ENCODE measurements at regions of chr19 and their contacts with region 1.

Region 1: GRCh38 chr19:36214386-36215275 is at the starts of genes ZNF146 and ZNF565:
- DNase-seq: peak; percentile 95
- H3K4me3 Mint-ChIP-seq: no peak within 1 kb of the TSS
- H3K27ac Mint-ChIP-seq: no peak within 1 kb of the TSS
- H3K4me1 Mint-ChIP-seq: peaks cover 3% of the 10 kb centered on the region
- H3K27me3 Mint-ChIP-seq: no peaks in the 10 kb centered on the region
- total RNA-seq, gene ZNF146: 82.3 and 86.4 TPM in 2 replicates
- total RNA-seq, gene ZNF565: 1.5 and 2.4 TPM in 2 replicates

Region 2: GRCh38 chr19:35740423-35741202 is 474.0 kb before region 1 on chr19:
- intact Hi-C with region 1: loop called (anchors 10 kb)
- DNase-seq: peak; percentile 95
- H3K4me3 Mint-ChIP-seq: peak overlapping the region; percentile 94
- H3K27ac Mint-ChIP-seq: peak overlapping the region; percentile 94
- H3K4me1 Mint-ChIP-seq: peaks cover 25% of the 10 kb centered on the region
- H3K27me3 Mint-ChIP-seq: no peaks in the 10 kb centered on the region

Region 3: GRCh38 chr19:36132489-36132891 is 82.1 kb before region 1 on chr19:
- intact Hi-C with region 1: loop called (anchors 2 kb)
- DNase-seq: no peak
- H3K4me3 Mint-ChIP-seq: peak overlapping the region; percentile 2
- H3K27ac Mint-ChIP-seq: peak overlapping the region; percentile 30
- H3K4me1 Mint-ChIP-seq: peaks cover 26% of the 10 kb centered on the region
- H3K27me3 Mint-ChIP-seq: no peaks in the 10 kb centered on the region

Region 4: DNA sequence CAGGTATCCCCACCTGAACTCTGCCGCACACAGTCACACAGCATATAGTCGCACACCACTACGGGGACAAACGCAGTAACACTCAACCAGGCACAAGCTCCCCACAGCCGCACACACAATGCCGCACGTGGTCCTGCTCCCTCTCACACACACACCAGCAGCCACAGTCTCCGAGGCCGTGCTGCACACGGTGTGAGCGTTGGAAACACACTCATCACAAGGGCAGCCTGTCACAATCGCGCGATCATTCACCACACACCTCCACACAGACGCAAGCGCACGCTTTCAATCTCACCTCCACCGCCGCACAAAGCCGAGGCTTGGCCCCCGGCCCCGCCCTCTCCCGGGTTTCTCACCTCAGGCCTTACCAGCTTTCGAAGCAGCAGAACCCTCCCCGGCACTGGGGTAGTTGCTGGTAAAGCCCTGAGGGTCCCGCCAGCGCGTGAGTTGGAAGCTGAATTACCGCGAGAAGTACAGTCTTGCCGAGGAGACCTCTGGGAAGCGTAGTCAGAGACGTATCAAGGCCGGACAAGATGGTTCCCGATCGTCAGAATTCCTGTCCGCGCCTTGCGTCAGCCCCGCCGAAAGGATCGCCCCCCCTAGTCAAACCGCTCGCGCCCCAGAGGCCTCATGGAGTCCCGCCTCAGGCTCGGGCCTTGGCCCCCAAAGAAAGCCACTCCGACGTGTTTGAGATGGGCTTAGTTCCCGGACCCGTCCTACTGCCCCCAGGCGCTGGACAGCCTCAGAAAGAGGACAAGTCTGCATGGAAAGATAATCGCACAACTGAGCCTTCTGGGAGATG is 274.7 kb after region 1 on chr19 and contains the start of gene ZNF566:
- intact Hi-C with region 1: loop called (anchors 1 kb)
- DNase-seq: peak; percentile 92
- H3K4me3 Mint-ChIP-seq: peak within 1 kb of the TSS; percentile 93
- H3K27ac Mint-ChIP-seq: peak within 1 kb of the TSS; percentile 97
- H3K4me1 Mint-ChIP-seq: peaks cover 19% of the 10 kb centered on the region
- H3K27me3 Mint-ChIP-seq: no peaks in the 10 kb centered on the region
- total RNA-seq, gene ZNF566: 7.3 and 7.7 TPM in 2 replicates

Region 5: DNA sequence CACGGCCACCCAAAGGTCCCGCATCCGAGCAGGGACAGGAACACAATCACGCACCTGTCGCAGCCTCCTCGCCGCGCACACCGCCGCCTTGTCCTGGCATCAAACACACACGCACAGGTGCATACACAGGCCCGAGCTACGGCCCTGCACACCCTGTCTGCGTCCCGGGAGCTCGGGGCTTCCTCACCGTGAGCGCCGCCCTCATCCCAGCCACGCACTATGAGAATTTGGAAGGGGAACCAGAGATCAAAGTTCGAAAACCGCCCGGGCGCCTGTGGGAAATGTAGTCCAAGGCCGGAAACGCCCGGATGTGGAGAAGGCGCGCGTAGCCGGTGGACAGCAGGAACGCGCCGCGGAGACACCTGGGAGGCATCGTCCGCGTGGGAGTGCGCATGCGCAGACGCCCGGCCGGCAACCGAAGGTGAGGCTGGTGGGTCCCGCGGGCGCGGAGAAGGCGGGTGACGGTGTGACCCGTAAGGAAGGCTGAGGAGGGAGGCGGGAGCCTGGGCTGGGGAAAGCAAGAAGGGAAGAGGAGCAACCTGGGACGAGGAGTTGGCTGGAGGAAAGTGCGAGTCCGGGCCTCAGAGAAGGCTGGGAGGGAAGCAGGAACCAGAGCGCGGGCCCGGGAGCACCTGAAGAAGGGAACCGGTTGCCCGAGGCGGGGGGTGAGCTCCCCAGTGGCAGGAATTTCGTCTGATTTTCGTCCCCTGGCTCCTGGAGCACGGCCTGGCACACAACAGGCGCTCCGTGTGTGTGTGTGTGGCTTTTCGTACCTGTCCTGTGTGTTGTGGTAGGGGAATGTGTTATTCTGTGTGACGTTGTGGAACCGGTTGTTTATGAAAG is 472.8 kb after region 1 on chr19 and contains the start of gene ZNF567:
- intact Hi-C with region 1: loop called (anchors 2 kb)
- DNase-seq: peak; percentile 96
- H3K4me3 Mint-ChIP-seq: peak within 1 kb of the TSS; percentile 95
- H3K27ac Mint-ChIP-seq: peak within 1 kb of the TSS; percentile 83
- H3K4me1 Mint-ChIP-seq: peaks cover 17% of the 10 kb centered on the region
- H3K27me3 Mint-ChIP-seq: no peaks in the 10 kb centered on the region
- total RNA-seq, gene ZNF567: 7.6 and 7.7 TPM in 2 replicates

Region 6: GRCh38 chr19:36915992-36916830 is 701.6 kb after region 1 on chr19 and contains the starts of genes ZNF568 and ZNF829:
- intact Hi-C with region 1: loop called (anchors 1 kb)
- DNase-seq: peak; percentile 92
- H3K4me3 Mint-ChIP-seq: peak within 1 kb of the TSS; percentile 90
- H3K27ac Mint-ChIP-seq: peak within 1 kb of the TSS; percentile 93
- H3K4me1 Mint-ChIP-seq: peaks cover 20% of the 10 kb centered on the region
- H3K27me3 Mint-ChIP-seq: no peaks in the 10 kb centered on the region
- total RNA-seq, gene ZNF568: 4.5 and 6.3 TPM in 2 replicates
- total RNA-seq, gene ZNF829: 3.4 and 3.5 TPM in 2 replicates